Left ventricle myocardium superior (tissue), 1 donor: ENCODE measurements at regions of chr3 and their contacts with region 1.

Region 1: DNA sequence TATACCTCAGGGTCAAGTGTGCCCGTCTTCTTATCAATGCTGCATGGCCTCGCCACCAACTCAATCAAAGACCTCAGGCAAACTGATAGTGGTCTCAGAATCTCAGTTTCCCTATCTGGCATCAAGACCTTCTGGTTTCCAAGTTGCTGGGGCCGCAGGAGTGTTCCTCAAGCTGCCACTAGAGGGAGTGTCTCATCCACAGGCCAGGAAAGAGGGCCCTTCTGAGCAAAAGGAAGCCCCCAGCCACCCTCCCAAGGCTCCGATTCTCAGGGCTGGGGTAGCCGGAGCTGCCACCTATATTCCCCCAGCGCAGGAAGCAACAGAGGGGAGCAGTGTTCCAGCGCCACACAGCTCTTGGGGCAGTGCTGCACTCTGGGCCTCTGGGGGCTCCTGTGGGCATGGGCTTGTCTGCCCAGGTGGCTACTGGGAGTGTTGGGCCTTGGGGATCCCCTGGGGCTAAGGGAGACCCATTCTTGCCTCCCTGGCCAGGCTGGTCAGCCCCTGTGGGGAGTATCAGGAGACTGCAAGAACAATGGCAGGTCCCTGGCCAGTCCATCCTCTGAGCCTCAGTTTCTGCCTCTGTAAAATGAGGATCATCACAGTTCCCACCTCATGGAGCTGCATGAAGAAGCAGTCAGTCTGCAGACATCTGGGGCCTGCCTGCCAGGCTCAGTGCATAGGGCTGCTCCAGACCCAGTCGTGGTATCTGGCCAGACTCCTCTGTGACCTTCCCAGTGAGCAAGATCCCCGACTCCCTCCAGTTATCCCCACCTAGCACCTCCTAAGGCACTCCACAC is 23.4 kb upstream of the SEC13 start:
- DNase-seq: peak; percentile 52
- ATAC-seq: peak; percentile 54

Region 2: DNA sequence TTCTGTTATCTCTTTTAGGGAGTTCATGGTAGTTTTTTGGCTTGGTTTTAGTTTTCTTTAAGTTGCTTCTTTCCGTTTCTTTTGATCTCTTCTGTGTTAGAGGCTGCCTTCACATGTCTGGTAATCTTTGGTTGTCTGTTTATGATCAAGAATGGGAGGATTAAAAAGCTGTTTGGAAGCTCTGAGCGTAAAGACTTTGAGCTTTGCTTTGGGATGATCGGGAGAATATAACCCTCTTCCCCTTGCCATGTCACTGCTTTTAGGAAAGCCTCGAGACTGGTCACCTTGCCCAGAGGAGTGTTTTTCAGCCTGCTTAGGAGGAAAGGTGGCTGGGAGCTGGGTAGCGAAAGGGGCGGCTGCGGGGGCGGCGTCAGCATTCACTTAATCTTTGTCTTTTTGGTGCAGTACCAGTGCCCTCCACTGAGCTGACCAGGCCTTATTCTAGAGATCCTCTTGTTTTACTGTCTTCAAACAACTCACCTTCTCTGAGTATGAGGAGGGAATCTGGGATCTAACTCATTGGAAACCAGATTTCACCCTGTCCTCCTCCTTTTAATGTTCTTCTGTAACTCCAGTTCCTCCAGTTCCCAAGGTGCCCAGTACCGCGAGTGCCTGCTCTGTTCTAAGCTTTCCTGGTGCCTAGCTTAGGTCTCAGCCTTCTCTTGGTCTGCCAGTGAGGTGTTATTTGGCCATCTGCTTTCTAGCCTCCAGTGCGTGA is 80.5 kb before region 1 on chr3:
- intact Hi-C with region 1: no loop called
- DNase-seq: no peak
- ATAC-seq: peak; percentile 49

Region 3: GRCh38 chr3:10577486-10577885 is 233.1 kb after region 1 on chr3:
- intact Hi-C with region 1: no loop called
- DNase-seq: peak; percentile 36
- ATAC-seq: peak; percentile 63

Region 4: DNA sequence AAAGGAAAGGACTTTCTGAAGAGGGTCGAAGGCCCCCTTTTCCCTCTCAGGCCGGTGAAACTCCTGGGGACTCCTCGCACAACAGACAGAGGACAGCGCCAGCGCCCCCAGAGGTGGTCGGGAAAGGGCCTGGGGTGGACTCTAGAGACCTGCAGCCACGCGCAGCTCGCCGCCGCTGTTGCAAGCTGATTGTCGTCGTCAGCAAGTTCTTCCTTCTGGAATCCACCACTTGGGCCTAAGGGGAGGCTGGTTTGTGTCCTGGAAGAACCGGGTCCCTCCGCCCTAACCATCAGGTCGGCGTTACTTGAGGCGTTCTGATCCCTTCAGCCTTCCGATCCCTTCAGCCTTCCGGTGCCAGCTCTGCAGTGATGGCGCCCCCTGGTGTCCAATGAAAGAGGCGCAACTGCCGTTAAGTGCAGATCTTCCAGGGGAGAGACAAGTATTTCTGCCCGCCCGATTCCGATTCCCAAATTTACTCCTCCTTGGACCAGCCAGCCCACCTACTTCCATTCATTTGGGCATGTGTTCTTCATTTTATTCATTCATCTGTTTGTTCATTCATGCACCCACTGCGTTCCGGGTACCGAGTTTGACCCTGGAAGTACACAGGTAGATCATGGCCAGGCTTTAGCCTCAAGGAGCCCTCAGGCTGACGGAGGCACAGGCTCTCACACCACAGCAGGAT is 394.5 kb after region 1 on chr3:
- intact Hi-C with region 1: loop called (anchors 10 kb)
- DNase-seq: peak; percentile 79
- ATAC-seq: peak; percentile 69